ENCODE measurements at regions of chr10 and their contacts with region 1.

Region 1: DNA sequence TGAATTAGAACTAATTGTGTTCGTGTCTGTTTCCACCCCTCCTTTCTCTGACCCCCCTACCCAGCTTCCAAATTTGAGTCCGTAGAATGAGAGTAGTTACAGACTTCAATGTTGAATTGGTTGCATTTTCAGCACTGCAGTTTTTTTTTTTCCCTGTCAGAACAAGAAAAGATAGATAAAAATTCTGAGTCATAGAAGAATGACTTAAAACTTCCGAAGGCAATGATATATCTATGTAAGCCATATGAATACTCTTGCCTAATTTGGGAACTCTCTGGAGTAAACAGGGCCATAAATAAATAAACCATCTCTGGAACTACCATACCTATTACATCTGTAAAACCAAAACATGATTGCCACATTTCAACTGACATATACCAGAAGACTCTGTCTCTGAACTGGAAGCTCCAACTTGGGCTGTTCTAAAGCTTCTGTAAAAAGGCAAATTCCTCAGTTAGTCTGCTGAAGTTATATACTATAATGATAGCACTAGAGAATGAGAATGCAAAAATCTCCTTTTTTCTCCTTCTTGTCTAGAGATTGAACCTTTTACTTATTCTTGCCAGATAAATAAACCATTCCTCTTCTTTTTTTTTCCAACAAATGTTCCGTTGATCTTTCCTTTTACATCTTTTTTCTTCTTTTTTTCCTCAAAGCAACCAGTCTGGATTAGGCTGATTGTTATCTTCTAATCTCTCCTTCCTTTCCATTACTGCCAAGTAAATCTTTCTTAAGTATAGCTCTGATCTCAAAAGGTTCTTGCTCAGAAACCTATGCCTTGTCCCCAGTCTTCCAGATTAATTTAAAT is 23.5 kb downstream of the VCL start:
- DNase-seq: peak in 1 of 2 experiments; percentile 67
- H3K4me3 ChIP-seq: no peak overlapping the region
- H3K27ac ChIP-seq: peak overlapping the region; percentile 31
- H3K4me1 ChIP-seq: peaks cover 38% of the 10 kb centered on the region
- H3K27me3 ChIP-seq: no peaks in the 10 kb centered on the region
- CTCF ChIP-seq: no peak

Region 2: GRCh38 chr10:74035303-74035702 is 13.9 kb after region 1 on chr10:
- CTCF ChIA-PET with region 1: no interaction called
- POLR2A ChIA-PET with region 1: interaction called, 13 read pairs
- intact Hi-C with region 1: no loop called
- DNase-seq: no peak
- H3K4me3 ChIP-seq: no peak overlapping the region
- H3K27ac ChIP-seq: 0 out of 2 replicates have a peak overlapping the region, but pooled peaks have one; percentile 24
- H3K4me1 ChIP-seq: no peaks in the 10 kb centered on the region
- H3K27me3 ChIP-seq: no peaks in the 10 kb centered on the region
- CTCF ChIP-seq: peak; percentile 44

Region 3: DNA sequence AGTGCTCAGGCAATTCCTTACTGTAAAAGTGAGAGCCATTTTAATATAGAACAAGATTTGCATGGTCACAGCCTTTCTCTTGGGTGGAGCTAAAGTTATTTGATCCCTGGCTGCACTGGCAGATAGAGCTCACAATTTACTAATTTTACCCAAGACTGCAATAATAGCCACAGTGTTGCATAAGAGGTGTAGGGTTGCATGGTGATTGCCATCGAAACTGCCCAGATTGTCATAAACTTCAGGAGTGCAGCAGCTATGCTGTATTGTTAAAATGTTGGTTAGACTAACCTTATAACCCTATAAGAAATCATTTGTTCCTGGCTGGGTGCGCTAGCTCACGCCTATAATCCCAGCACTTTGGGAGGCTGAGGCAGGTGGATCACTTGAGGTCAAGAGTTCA is 26.4 kb after region 1 on chr10:
- CTCF ChIA-PET with region 1: no interaction called
- POLR2A ChIA-PET with region 1: interaction called, 23 read pairs
- intact Hi-C with region 1: no loop called
- DNase-seq: peak; percentile 61 to 89
- H3K4me3 ChIP-seq: peak overlapping the region; percentile 29; the same call in 1 of the 2 replicates
- H3K27ac ChIP-seq: peak overlapping the region; percentile 90
- H3K4me1 ChIP-seq: peaks cover 62% of the 10 kb centered on the region
- H3K27me3 ChIP-seq: no peaks in the 10 kb centered on the region
- CTCF ChIP-seq: no peak

Region 4: GRCh38 chr10:74165530-74165901 is 144.1 kb after region 1 on chr10:
- CTCF ChIA-PET with region 1: no interaction called
- POLR2A ChIA-PET with region 1: no interaction called
- intact Hi-C with region 1: no loop called
- DNase-seq: no peak
- H3K4me3 ChIP-seq: no peak overlapping the region
- H3K27ac ChIP-seq: no peak overlapping the region
- H3K4me1 ChIP-seq: no peaks in the 10 kb centered on the region
- H3K27me3 ChIP-seq: no peaks in the 10 kb centered on the region
- CTCF ChIP-seq: no peak

Measured in PC-9 (cell line).